ACHN (cell line): ENCODE measurements at regions of chr1 and their contacts with region 1.

Region 1: GRCh38 chr1:24635195-24635843 is 7.8 kb upstream of the SRRM1 start:
- DNase-seq: peak; percentile 60

Region 2: DNA sequence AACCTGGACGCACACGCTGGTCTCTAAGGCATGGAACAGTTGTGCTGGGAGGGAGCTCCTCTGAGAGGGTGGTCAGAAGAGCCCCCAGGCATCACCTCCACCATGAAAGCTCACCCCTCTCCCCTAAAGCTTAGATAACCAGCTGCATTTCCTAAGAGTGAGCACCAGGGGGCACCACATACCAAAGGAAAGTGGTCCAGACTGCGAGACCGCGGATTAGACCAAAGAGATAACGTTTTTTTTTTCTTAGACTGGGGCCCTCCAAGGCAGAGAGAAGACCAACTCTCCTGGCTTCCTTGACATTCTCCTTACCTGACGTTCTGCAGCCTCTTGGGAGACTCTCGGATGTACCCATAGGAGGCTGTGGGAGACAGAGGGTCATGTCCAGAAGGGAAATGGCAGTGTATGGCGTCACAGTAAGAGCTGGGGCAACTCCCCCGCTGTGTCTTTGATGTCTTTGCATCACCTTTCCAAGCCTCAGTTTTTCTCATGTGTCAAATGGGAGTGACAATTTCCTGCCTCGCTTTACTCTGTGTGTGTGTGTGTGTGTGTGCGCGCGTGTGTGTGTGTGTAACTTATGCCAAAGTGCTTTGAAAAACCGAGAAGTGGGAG is 435.9 kb before region 1 on chr1:
- in situ Hi-C with region 1: loop called (anchors 10 kb)
- DNase-seq: peak; percentile 56